Activated naive CD4-positive, alpha-beta T cell treated with anti-CD3 and anti-CD28 coated beads for 36 hours (primary cell): ENCODE measurements at regions of chr12 and their contacts with region 1.

Region 1: DNA sequence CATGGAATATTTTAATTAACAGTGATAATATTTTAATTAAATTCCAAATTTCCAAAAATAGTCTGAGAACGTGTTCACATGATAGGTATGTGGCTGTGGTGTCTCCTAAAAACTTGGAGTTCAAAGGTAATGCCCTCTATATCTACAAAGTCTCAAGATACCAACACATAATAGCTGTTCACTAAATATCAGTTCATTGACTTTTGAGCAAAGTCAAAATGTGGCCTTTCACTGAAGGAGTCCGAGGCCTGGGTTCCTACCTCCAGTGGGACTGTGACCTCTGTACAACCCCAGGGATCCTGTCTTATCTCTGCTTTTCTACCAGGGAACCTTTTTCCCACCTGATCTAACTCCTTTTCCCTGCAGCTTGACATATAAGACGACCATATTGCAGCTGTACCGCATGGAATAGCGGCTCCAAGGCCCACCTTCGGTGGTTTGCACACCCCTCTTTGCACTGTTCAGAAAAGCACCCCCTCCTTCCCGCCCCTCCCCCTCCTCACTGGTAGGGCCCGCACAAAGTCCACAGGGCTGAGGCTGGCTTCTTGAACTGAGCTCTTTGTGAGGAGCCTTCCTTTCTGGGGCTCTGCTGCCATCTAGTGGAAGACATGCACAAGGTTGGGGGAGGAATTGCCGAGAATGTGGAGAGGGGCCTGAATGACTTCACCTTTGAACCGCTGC is 3.1 kb downstream of the CCND2 start:
- DNase-seq: peak; percentile 95
- H3K4me3 Mint-ChIP-seq: peak overlapping the region; percentile 99
- H3K27ac Mint-ChIP-seq: peak overlapping the region; percentile 99
- H3K4me1 Mint-ChIP-seq: peaks cover 55% of the 10 kb centered on the region
- H3K27me3 Mint-ChIP-seq: no peaks in the 10 kb centered on the region

Region 2: GRCh38 chr12:3988519-3989448 is 287.9 kb before region 1 on chr12:
- CTCF ChIA-PET with region 1: interaction called, 69 read pairs
- intact Hi-C with region 1: loop called (anchors 5 kb)
- DNase-seq: peak; percentile 54
- H3K4me3 Mint-ChIP-seq: peak overlapping the region; percentile 20
- H3K27ac Mint-ChIP-seq: peak overlapping the region; percentile 67
- H3K4me1 Mint-ChIP-seq: peaks cover 32% of the 10 kb centered on the region
- H3K27me3 Mint-ChIP-seq: no peaks in the 10 kb centered on the region

Region 3: GRCh38 chr12:4037747-4038312 is 238.8 kb before region 1 on chr12:
- CTCF ChIA-PET with region 1: interaction called, 15 read pairs
- intact Hi-C with region 1: no loop called
- DNase-seq: peak; percentile 51
- H3K4me3 Mint-ChIP-seq: no peak overlapping the region
- H3K27ac Mint-ChIP-seq: no peak overlapping the region
- H3K4me1 Mint-ChIP-seq: peaks cover 4% of the 10 kb centered on the region
- H3K27me3 Mint-ChIP-seq: no peaks in the 10 kb centered on the region

Region 4: GRCh38 chr12:4141348-4142270 is 135.1 kb before region 1 on chr12:
- CTCF ChIA-PET with region 1: interaction called, 55 read pairs
- intact Hi-C with region 1: loop called (anchors 1 kb)
- DNase-seq: no peak
- H3K4me3 Mint-ChIP-seq: no peak overlapping the region
- H3K27ac Mint-ChIP-seq: peak overlapping the region; percentile 90
- H3K4me1 Mint-ChIP-seq: peaks cover 90% of the 10 kb centered on the region
- H3K27me3 Mint-ChIP-seq: no peaks in the 10 kb centered on the region

Region 5: DNA sequence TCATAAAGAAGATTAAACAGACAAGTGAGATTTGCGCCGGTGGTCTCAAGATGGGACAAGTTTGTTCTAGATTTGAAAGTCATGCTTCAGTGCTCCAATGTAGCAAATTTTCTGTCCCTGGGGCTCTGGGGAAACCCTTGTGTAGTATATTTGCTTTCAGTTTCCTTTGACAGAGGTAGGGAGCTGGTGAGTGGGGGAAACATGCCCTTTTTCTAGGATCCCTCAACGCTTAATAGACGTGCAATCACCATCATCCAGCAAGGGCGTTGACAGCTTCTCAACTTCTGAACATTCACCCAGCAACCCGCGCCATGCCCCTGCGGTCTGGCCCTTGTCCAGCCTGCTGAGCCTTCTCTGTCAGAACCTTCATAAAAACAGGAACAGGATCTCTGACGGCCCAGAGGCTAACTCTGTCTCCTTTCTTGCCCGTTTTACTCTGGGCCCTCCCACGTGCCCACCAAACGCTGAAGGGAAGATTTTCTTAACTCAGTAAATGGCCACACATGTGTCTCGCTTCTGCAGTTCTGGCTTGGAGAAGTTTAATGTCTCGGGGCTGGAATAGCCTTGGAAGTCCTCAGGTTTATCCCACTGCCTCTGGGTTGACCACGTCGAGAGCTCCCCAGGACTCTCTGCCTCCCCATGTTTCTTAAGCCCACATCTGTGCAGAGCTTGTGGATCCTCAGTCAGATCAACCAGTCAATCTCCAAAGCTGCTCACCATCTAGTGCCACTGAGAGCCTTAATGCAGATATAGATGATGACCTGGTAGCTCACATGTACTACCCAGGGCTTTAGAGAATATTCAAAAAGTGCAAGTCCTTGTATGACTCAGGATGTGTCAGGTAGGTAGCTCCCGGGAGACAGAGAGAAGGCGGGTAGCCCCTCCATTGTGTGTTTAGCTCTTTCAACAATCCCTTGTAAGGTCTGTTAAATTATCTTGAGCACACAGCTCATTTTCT is 61.2 kb before region 1 on chr12:
- CTCF ChIA-PET with region 1: interaction called, 21 read pairs
- intact Hi-C with region 1: loop called (anchors 1 kb)
- DNase-seq: peak; percentile 79
- H3K4me3 Mint-ChIP-seq: peak overlapping the region; percentile 60
- H3K27ac Mint-ChIP-seq: peak overlapping the region; percentile 91
- H3K4me1 Mint-ChIP-seq: peaks cover 33% of the 10 kb centered on the region
- H3K27me3 Mint-ChIP-seq: no peaks in the 10 kb centered on the region

Region 6: DNA sequence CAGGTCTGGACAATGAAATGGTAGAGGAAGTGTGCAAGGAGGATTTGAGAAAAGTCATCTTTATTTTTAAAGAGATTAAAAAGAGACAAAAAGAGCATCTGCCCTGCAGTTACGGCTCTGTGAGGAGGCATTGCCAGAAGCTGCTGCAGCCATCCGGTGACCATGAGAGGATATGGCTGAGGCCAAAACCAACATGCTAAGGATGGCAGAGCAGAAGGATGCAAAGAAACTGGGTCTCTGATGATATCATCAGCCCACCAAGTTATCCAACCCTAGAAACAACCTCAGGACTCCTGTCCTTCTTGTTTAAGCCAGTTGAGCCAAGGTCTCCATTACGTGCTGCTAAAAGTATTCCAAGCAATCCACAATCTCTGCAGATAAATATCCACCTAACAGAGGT is 51.1 kb before region 1 on chr12:
- CTCF ChIA-PET with region 1: no interaction called
- intact Hi-C with region 1: no loop called
- DNase-seq: no peak
- H3K4me3 Mint-ChIP-seq: no peak overlapping the region
- H3K27ac Mint-ChIP-seq: no peak overlapping the region
- H3K4me1 Mint-ChIP-seq: peaks cover 6% of the 10 kb centered on the region
- H3K27me3 Mint-ChIP-seq: peaks cover 3% of the 10 kb centered on the region

Region 7: GRCh38 chr12:4311776-4312175 is 35.1 kb after region 1 on chr12:
- CTCF ChIA-PET with region 1: no interaction called
- intact Hi-C with region 1: no loop called
- DNase-seq: no peak
- H3K4me3 Mint-ChIP-seq: no peak overlapping the region
- H3K27ac Mint-ChIP-seq: no peak overlapping the region
- H3K4me1 Mint-ChIP-seq: no peaks in the 10 kb centered on the region
- H3K27me3 Mint-ChIP-seq: no peaks in the 10 kb centered on the region

Region 8: DNA sequence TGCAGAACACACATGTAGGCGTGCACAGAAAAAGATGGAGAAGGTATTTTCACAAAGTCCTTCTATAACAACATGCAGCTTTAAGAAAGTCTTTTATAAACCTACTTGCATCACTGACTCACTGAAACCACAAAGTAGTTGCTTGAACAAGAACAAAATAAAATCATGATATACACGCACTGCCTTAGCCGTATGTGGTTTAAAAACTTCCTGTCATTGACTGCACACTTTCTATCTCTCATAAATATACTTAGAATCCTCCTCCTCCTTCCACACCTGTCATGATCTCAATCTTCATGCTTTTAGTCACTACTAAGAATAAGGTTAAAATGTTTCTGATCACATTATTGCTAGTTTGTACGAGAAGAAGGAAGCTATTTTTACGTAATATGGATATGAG is 230.2 kb after region 1 on chr12:
- CTCF ChIA-PET with region 1: no interaction called
- intact Hi-C with region 1: loop called (anchors 5 kb)
- DNase-seq: peak; percentile 32
- H3K4me3 Mint-ChIP-seq: peak overlapping the region; percentile 1
- H3K27ac Mint-ChIP-seq: peak overlapping the region; percentile 63
- H3K4me1 Mint-ChIP-seq: peaks cover 26% of the 10 kb centered on the region
- H3K27me3 Mint-ChIP-seq: no peaks in the 10 kb centered on the region

Region 9: GRCh38 chr12:4603421-4603820 is 326.8 kb after region 1 on chr12:
- CTCF ChIA-PET with region 1: no interaction called
- intact Hi-C with region 1: no loop called
- DNase-seq: no peak
- H3K4me3 Mint-ChIP-seq: no peak overlapping the region
- H3K27ac Mint-ChIP-seq: no peak overlapping the region
- H3K4me1 Mint-ChIP-seq: peaks cover 18% of the 10 kb centered on the region
- H3K27me3 Mint-ChIP-seq: peaks cover 8% of the 10 kb centered on the region

Region 10: GRCh38 chr12:5022465-5023061 is 745.9 kb after region 1 on chr12:
- CTCF ChIA-PET with region 1: no interaction called
- intact Hi-C with region 1: no loop called
- DNase-seq: peak; percentile 54
- H3K4me3 Mint-ChIP-seq: no peak overlapping the region
- H3K27ac Mint-ChIP-seq: no peak overlapping the region
- H3K4me1 Mint-ChIP-seq: no peaks in the 10 kb centered on the region
- H3K27me3 Mint-ChIP-seq: peaks cover 16% of the 10 kb centered on the region